PC-3 (cell line): ENCODE measurements at regions of chr19 and their contacts with region 1.

Region 1: GRCh38 chr19:2543463-2544442 is 67.8 kb downstream of the GADD45B start:
- DNase-seq: peak; percentile 94
- ATAC-seq: peak; percentile 79
- H3K4me3 ChIP-seq: peak overlapping the region; percentile 54
- H3K27ac ChIP-seq: peak overlapping the region; percentile 88
- H3K4me1 ChIP-seq: peaks cover 47% of the 10 kb centered on the region
- H3K27me3 ChIP-seq: no peaks in the 10 kb centered on the region
- CTCF ChIP-seq: peak; percentile 35; the same call in 1 of the 2 replicates

Region 2: GRCh38 chr19:2524838-2525723 is 18.7 kb before region 1 on chr19:
- CTCF ChIA-PET with region 1: interaction called, 9 read pairs
- POLR2A ChIA-PET with region 1: interaction called, 19 read pairs
- intact Hi-C with region 1: loop called (anchors 2 kb)
- DNase-seq: peak; percentile 87
- ATAC-seq: peak; percentile 89
- H3K4me3 ChIP-seq: peak overlapping the region; percentile 62
- H3K27ac ChIP-seq: peak overlapping the region; percentile 65
- H3K4me1 ChIP-seq: peaks cover 27% of the 10 kb centered on the region
- H3K27me3 ChIP-seq: no peaks in the 10 kb centered on the region
- CTCF ChIP-seq: no peak

Region 3: GRCh38 chr19:2578901-2579677 is 35.3 kb after region 1 on chr19:
- CTCF ChIA-PET with region 1: interaction called, 5 read pairs
- POLR2A ChIA-PET with region 1: interaction called, 11 read pairs
- intact Hi-C with region 1: loop called (anchors 1 kb)
- DNase-seq: peak; percentile 87
- ATAC-seq: peak; percentile 86
- H3K4me3 ChIP-seq: peak overlapping the region; percentile 70
- H3K27ac ChIP-seq: peak overlapping the region; percentile 57
- H3K4me1 ChIP-seq: peaks cover 22% of the 10 kb centered on the region
- H3K27me3 ChIP-seq: no peaks in the 10 kb centered on the region
- CTCF ChIP-seq: peak; percentile 84